Caco-2 (cell line): ENCODE measurements at regions of chr1 and their contacts with region 1.

Region 1: GRCh38 chr1:230867903-230868735 is at the start of gene C1orf198:
- DNase-seq: peak; percentile 81 to 87
- H3K4me3 ChIP-seq: peak within 1 kb of the TSS; percentile 90
- H3K4me3 Mint-ChIP-seq: peak within 1 kb of the TSS; percentile 81
- H3K27ac Mint-ChIP-seq: peak within 1 kb of the TSS; percentile 97
- H3K4me1 ChIP-seq: peaks cover 35% of the 10 kb centered on the region
- H3K4me1 Mint-ChIP-seq: peaks cover 42% of the 10 kb centered on the region
- H3K27me3 ChIP-seq: no peaks in the 10 kb centered on the region
- H3K27me3 Mint-ChIP-seq: no peaks in the 10 kb centered on the region
- CTCF ChIP-seq: no peak
- total RNA-seq, gene C1orf198: 80.1 and 92.2 TPM in 2 replicates

Region 2: GRCh38 chr1:230899841-230900251 is 31.7 kb after region 1 on chr1:
- CTCF ChIA-PET with region 1: no interaction called
- POLR2A ChIA-PET with region 1: interaction called, 6 read pairs
- intact Hi-C with region 1: loop called (anchors 2 kb)
- DNase-seq: peak; percentile 57 to 58
- H3K4me3 ChIP-seq: no peak overlapping the region
- H3K4me3 Mint-ChIP-seq: peak overlapping the region; percentile 0
- H3K27ac Mint-ChIP-seq: peak overlapping the region; percentile 42
- H3K4me1 ChIP-seq: peaks cover 33% of the 10 kb centered on the region
- H3K4me1 Mint-ChIP-seq: peaks cover 32% of the 10 kb centered on the region
- H3K27me3 ChIP-seq: no peaks in the 10 kb centered on the region
- H3K27me3 Mint-ChIP-seq: no peaks in the 10 kb centered on the region
- CTCF ChIP-seq: no peak

Region 3: GRCh38 chr1:230917284-230918135 is 49.4 kb after region 1 on chr1:
- CTCF ChIA-PET with region 1: interaction called, 4 read pairs
- POLR2A ChIA-PET with region 1: interaction called, 4 read pairs
- intact Hi-C with region 1: loop called (anchors 1 kb)
- DNase-seq: peak; percentile 84
- H3K4me3 ChIP-seq: no peak overlapping the region
- H3K4me3 Mint-ChIP-seq: no peak overlapping the region
- H3K27ac Mint-ChIP-seq: no peak overlapping the region
- H3K4me1 ChIP-seq: peaks cover 25% of the 10 kb centered on the region
- H3K4me1 Mint-ChIP-seq: peaks cover 33% of the 10 kb centered on the region
- H3K27me3 ChIP-seq: no peaks in the 10 kb centered on the region
- H3K27me3 Mint-ChIP-seq: no peaks in the 10 kb centered on the region
- CTCF ChIP-seq: peak; percentile 69 to 70

Region 4: DNA sequence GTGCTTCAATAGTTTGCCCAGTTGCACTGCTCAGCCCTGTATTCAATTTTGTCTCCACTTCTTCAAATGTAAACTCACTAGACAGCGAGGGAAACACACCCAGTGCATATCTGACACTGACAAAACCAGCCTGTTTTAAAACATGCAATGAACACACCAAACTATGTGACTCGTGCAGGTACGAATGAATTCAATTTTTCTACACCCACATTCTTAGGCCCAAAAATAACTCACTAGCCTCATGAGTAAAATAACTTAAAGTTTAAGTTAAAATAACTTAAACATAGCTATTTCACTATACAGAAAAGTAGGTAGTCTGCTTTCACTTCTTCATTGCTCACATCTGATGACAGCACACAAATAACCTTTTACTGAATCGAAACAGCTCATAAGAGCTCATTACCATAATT is 89.5 kb after region 1 on chr1:
- CTCF ChIA-PET with region 1: no interaction called
- POLR2A ChIA-PET with region 1: no interaction called
- intact Hi-C with region 1: no loop called
- DNase-seq: no peak
- H3K4me3 ChIP-seq: no peak overlapping the region
- H3K4me3 Mint-ChIP-seq: no peak overlapping the region
- H3K27ac Mint-ChIP-seq: no peak overlapping the region
- H3K4me1 ChIP-seq: peaks cover 12% of the 10 kb centered on the region
- H3K4me1 Mint-ChIP-seq: peaks cover 15% of the 10 kb centered on the region
- H3K27me3 ChIP-seq: no peaks in the 10 kb centered on the region
- H3K27me3 Mint-ChIP-seq: no peaks in the 10 kb centered on the region
- CTCF ChIP-seq: no peak

Region 5: DNA sequence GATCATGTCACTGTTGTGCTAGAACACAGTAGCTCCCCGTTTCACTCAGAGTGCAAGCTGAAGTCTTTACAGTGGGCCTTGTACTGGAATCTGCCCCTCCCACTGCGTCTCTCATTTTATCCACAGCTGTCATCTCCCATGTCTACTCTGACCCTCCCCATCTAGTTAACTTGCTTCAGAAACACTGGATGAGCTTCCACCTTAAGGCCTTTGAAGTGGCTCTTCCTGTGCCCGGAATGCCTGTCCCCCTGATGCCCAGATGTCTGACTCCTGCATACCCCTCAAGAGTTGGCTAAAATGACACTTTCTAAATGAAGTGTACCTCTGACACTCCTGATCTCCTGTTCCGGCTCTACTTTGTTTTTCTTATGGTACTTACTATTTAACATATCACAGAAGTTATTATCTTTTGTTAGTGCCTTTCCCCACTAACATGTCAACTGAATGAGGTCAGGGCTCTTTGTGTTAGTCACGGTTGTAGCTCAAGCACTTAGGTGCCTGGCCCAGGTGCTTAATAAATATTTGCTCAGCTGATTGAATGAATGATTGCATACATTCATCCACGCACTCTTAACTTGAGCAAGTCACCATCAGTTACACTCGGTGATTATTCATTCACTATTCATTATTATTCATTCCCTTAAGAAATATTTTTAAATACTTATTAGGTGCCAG is 124.1 kb after region 1 on chr1:
- CTCF ChIA-PET with region 1: no interaction called
- POLR2A ChIA-PET with region 1: interaction called, 11 read pairs
- intact Hi-C with region 1: no loop called
- DNase-seq: no peak
- H3K4me3 ChIP-seq: no peak overlapping the region
- H3K4me3 Mint-ChIP-seq: no peak overlapping the region
- H3K27ac Mint-ChIP-seq: peak overlapping the region; percentile 60
- H3K4me1 ChIP-seq: no peaks in the 10 kb centered on the region
- H3K4me1 Mint-ChIP-seq: peaks cover 18% of the 10 kb centered on the region
- H3K27me3 ChIP-seq: no peaks in the 10 kb centered on the region
- H3K27me3 Mint-ChIP-seq: no peaks in the 10 kb centered on the region
- CTCF ChIP-seq: no peak